Heart right ventricle (tissue), 16 donors: ENCODE measurements at regions of chr3 and their contacts with region 1.

Region 1: GRCh38 chr3:158127250-158128219 is 17.6 kb downstream of the RSRC1 start:
- DNase-seq: no peak
- ATAC-seq: no peak
- H3K4me3 ChIP-seq: no peak overlapping the region
- H3K27ac ChIP-seq: no peak overlapping the region
- H3K4me1 ChIP-seq: no peaks in the 10 kb centered on the region
- H3K27me3 ChIP-seq: no peaks in the 10 kb centered on the region
- CTCF ChIP-seq: no peak

Region 2: GRCh38 chr3:158091531-158091930 is 36.0 kb before region 1 on chr3:
- intact Hi-C with region 1: loop called in 1 of 10 experiments (anchors 1 kb)
- DNase-seq: no peak
- ATAC-seq: no peak
- H3K4me3 ChIP-seq: no peak overlapping the region
- H3K27ac ChIP-seq: no peak overlapping the region
- H3K4me1 ChIP-seq: peaks cover 0 to 9% (median 0%) of the 10 kb centered on the region in 9 donors
- H3K27me3 ChIP-seq: peaks cover 20 to 100% (median 95%) of the 10 kb centered on the region in 7 donors
- CTCF ChIP-seq: peak in 3 of 9 donors; percentile 7 to 25 (median 15)

Region 3: GRCh38 chr3:158308236-158308928 is 180.8 kb after region 1 on chr3:
- intact Hi-C with region 1: no loop called
- DNase-seq: no peak
- ATAC-seq: no peak
- H3K4me3 ChIP-seq: no peak overlapping the region
- H3K27ac ChIP-seq: no peak overlapping the region
- H3K4me1 ChIP-seq: no peaks in the 10 kb centered on the region
- H3K27me3 ChIP-seq: no peaks in the 10 kb centered on the region
- CTCF ChIP-seq: no peak